Prostate gland (tissue), 2 donors: ENCODE measurements at regions of chr14 and their contacts with region 1.

Region 1: GRCh38 chr14:20682435-20683124 is 1.8 kb upstream of the RNASE4 start:
- DNase-seq: peak; percentile 90
- H3K4me3 ChIP-seq: peak overlapping the region; percentile 65 to 73
- H3K27ac ChIP-seq: peak overlapping the region; percentile 99 to 100
- H3K4me1 ChIP-seq: no peaks in the 10 kb centered on the region
- H3K27me3 ChIP-seq: no peaks in the 10 kb centered on the region
- CTCF ChIP-seq: no peak
- POLR2A ChIP-seq: peak; percentile 91

Region 2: GRCh38 chr14:20343092-20343861 is 339.3 kb before region 1 on chr14 and contains the start of gene PARP2:
- intact Hi-C with region 1: loop called (anchors 2 kb)
- DNase-seq: peak; percentile 95
- H3K4me3 ChIP-seq: peak within 1 kb of the TSS; percentile 56 to 68
- H3K27ac ChIP-seq: peak within 1 kb of the TSS; percentile 89
- H3K4me1 ChIP-seq: no peaks in the 10 kb centered on the region
- H3K27me3 ChIP-seq: no peaks in the 10 kb centered on the region
- CTCF ChIP-seq: peak in 2 of 4 experiments; percentile 18 to 27
- POLR2A ChIP-seq: peak; percentile 65
- total RNA-seq, gene PARP2: 10.7 to 23.1 TPM

Region 3: GRCh38 chr14:20413045-20413799 is 269.4 kb before region 1 on chr14 and contains the start of gene TEP1:
- intact Hi-C with region 1: loop called (anchors 2 kb)
- DNase-seq: peak; percentile 88
- H3K4me3 ChIP-seq: peak within 1 kb of the TSS; percentile 81 to 84
- H3K27ac ChIP-seq: peak within 1 kb of the TSS; percentile 97 to 99
- H3K4me1 ChIP-seq: no peaks in the 10 kb centered on the region
- H3K27me3 ChIP-seq: no peaks in the 10 kb centered on the region
- CTCF ChIP-seq: peak in 1 of 4 experiments; percentile 7
- POLR2A ChIP-seq: peak; percentile 75
- total RNA-seq, gene TEP1: 25.8 to 31.0 TPM

Region 4: GRCh38 chr14:20461274-20462001 is 221.1 kb before region 1 on chr14 and contains the start of gene PIP4P1:
- intact Hi-C with region 1: loop called (anchors 5 kb)
- DNase-seq: peak; percentile 100
- H3K4me3 ChIP-seq: peak within 1 kb of the TSS; percentile 97 to 98
- H3K27ac ChIP-seq: peak within 1 kb of the TSS; percentile 98 to 99
- H3K4me1 ChIP-seq: peaks cover 2% of the 10 kb centered on the region
- H3K27me3 ChIP-seq: no peaks in the 10 kb centered on the region
- CTCF ChIP-seq: peak in 1 of 4 experiments; percentile 35
- POLR2A ChIP-seq: peak; percentile 83
- total RNA-seq, gene PIP4P1: 24.8 to 37.8 TPM

Region 5: DNA sequence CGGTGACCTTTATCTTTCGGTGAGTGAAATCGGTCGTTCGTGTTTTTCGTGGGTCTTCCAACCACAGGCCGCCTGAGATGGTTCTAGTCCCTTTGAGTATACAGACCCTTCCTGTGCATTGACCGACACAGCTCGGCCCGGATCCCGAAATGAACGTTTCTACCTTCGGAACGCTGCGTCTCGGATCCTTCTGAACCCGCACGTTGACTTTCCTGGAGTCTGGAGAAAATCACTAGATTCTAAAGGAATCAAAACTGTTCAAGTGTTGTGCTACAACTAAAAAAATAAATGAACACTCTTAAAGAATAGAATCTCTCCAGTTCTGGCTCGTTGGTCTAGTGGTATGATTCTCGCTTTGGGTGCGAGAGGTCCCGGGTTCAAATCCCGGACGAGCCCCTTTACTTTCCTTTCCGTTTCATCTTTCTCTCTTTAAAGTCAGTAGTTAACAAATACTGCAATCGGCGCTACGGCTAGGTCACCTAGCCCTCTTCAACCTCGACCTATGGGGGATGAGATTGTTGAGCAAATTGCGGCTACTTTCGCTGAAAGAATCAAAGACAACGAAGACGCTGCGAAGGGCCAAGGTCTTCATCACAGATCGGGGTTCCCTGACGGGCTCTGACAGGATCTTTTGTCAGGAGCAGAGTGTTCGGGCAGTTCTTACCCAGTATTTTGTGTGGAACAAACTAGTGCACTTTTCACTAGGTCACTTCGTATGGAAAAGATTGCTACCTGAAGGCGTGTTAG is 49.7 kb before region 1 on chr14:
- intact Hi-C with region 1: loop called (anchors 5 kb)
- DNase-seq: no peak
- H3K4me3 ChIP-seq: peak overlapping the region in 1 of 2 donors; percentile 15
- H3K27ac ChIP-seq: no peak overlapping the region
- H3K4me1 ChIP-seq: peaks cover 5% of the 10 kb centered on the region
- H3K27me3 ChIP-seq: no peaks in the 10 kb centered on the region
- CTCF ChIP-seq: no peak
- POLR2A ChIP-seq: no peak

Region 6: DNA sequence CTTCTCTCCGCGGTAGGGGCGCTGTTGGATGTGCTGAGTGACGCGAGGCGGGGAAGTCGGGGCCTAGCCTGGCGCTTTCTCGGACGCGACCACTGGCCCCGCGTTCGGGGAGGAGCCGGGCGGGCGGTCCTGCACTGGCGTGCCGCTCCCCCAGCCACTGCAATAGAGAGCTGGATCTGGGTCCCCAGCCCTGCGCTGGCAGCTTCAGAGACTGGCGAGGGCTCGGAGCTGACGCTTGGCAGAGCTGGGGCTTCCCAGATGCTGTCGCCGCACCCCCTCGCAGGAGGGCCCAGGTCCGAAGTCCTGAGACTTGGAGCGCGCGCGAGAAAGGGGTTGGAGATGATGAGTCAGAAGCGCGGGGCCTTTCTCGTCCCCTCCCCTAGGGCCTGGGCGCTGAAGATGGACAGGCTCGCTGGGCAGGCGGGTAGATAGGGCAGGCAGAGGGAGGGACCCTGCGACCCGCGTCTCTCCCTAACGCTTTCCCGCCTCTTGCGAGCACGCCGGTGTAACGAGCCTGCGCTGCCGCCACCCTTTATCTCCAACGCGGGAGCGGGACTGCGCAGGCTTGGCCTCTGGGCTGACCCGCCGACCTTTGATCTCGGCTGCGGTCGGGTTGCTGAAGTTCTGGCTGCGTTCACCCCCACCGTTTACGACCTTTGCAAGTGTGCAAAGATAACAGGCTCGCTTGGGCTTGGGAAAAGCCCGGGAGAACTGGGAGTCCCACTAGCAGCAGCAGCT is 421.3 kb after region 1 on chr14:
- intact Hi-C with region 1: loop called (anchors 5 kb)
- DNase-seq: peak; percentile 96
- H3K4me3 ChIP-seq: peak overlapping the region; percentile 61 to 73
- H3K27ac ChIP-seq: peak overlapping the region; percentile 93 to 99
- H3K4me1 ChIP-seq: peaks cover 17% of the 10 kb centered on the region
- H3K27me3 ChIP-seq: no peaks in the 10 kb centered on the region
- CTCF ChIP-seq: peak; percentile 52 to 95 (median 68)
- POLR2A ChIP-seq: peak; percentile 94